Naive thymus-derived CD4-positive, alpha-beta T cell (primary cell): ENCODE measurements at regions of chr3 and their contacts with region 1.

Region 1: DNA sequence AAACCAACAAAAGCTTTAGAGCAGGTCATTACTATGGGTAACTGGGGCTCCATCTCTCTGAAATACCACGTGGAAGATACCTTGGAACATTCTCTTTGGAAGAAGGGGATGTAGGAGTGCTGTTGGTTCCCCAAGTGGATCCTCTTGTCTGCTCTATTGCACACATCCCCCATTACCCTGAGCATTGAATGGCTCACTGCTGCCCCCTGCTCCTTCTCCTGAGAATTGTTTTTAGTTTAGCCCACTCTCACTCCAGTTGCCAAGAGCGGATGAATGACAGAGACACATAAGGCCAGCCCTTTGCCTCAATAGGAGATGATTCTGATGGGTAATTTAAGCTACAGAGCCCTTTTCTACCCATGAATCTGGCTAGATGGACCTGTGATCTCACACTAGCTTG is 135.6 kb upstream of the SUCLG2 start:
- DNase-seq: peak; percentile 17 to 75 (median 61)
- ATAC-seq: peak; percentile 78
- H3K4me3 ChIP-seq: no peak overlapping the region
- H3K4me3 Mint-ChIP-seq: peak overlapping the region in 3 of 10 donors; percentile 3 to 19 (median 19)
- H3K27ac ChIP-seq: no peak overlapping the region
- H3K27ac Mint-ChIP-seq: peak overlapping the region in 1 of 9 donors; percentile 3
- H3K4me1 ChIP-seq: peaks cover 0 to 9% of the 10 kb centered on the region in 2 donors
- H3K4me1 Mint-ChIP-seq: peaks cover 6 to 23% (median 15%) of the 10 kb centered on the region in 7 donors
- H3K27me3 ChIP-seq: no peaks in the 10 kb centered on the region
- H3K27me3 Mint-ChIP-seq: peaks cover 0 to 7% (median 0%) of the 10 kb centered on the region in 5 donors

Region 2: DNA sequence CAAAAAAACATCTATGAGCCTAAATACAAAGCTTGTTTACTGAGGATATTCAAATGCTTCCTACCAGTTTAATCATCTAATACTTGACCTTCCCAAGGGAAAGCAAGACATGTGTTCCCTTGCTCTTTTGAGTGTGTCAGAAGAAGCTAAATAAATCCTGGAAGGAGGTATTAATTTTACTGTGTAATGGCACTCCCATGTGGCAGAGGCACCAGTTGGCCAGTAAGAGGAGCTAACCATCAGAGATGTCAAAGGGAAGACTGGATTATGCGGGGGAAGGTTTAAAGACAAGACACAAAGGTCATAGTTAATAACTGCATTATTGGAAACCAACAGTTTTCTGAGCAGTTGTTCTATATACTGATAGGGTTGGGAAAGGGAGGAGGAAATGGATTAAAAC is 260.7 kb before region 1 on chr3:
- CTCF ChIA-PET with region 1: interaction called, 3 read pairs
- POLR2A ChIA-PET with region 1: no interaction called
- intact Hi-C with region 1: loop called in 1 of 2 experiments (anchors 1 kb)
- DNase-seq: no peak
- ATAC-seq: no peak
- H3K4me3 ChIP-seq: no peak overlapping the region
- H3K4me3 Mint-ChIP-seq: no peak overlapping the region
- H3K27ac ChIP-seq: no peak overlapping the region
- H3K27ac Mint-ChIP-seq: peak overlapping the region in 6 of 9 donors; percentile 3 to 73 (median 37)
- H3K4me1 ChIP-seq: no peaks in the 10 kb centered on the region
- H3K4me1 Mint-ChIP-seq: peaks cover 12 to 57% (median 41%) of the 10 kb centered on the region in 7 donors
- H3K27me3 ChIP-seq: no peaks in the 10 kb centered on the region
- H3K27me3 Mint-ChIP-seq: no peaks in the 10 kb centered on the region

Region 3: GRCh38 chr3:67593761-67594244 is 196.2 kb before region 1 on chr3:
- CTCF ChIA-PET with region 1: no interaction called
- POLR2A ChIA-PET with region 1: no interaction called
- intact Hi-C with region 1: loop called in 1 of 2 experiments (anchors 2 kb)
- DNase-seq: no peak
- ATAC-seq: peak; percentile 44
- H3K4me3 ChIP-seq: no peak overlapping the region
- H3K4me3 Mint-ChIP-seq: no peak overlapping the region
- H3K27ac ChIP-seq: no peak overlapping the region
- H3K27ac Mint-ChIP-seq: peak overlapping the region in 1 of 9 donors; percentile 80
- H3K4me1 ChIP-seq: peaks cover 6 to 25% of the 10 kb centered on the region in 2 donors
- H3K4me1 Mint-ChIP-seq: peaks cover 18 to 94% (median 78%) of the 10 kb centered on the region in 7 donors
- H3K27me3 ChIP-seq: no peaks in the 10 kb centered on the region
- H3K27me3 Mint-ChIP-seq: no peaks in the 10 kb centered on the region